Activated CD4-positive, alpha-beta memory T cell treated with anti-CD3 and anti-CD28 coated beads for 36 hours (primary cell): ENCODE measurements at regions of chr5 and their contacts with region 1.

Region 1: GRCh38 chr5:91266184-91266705 is 116.9 kb downstream of the ARRDC3 start:
- DNase-seq: no peak
- H3K4me3 Mint-ChIP-seq: no peak overlapping the region
- H3K27ac Mint-ChIP-seq: no peak overlapping the region
- H3K4me1 Mint-ChIP-seq: peaks cover 21% of the 10 kb centered on the region
- H3K27me3 Mint-ChIP-seq: no peaks in the 10 kb centered on the region

Region 2: GRCh38 chr5:91095313-91095712 is 170.9 kb before region 1 on chr5:
- CTCF ChIA-PET with region 1: no interaction called
- POLR2A ChIA-PET with region 1: no interaction called
- intact Hi-C with region 1: no loop called
- DNase-seq: no peak
- H3K4me3 Mint-ChIP-seq: no peak overlapping the region
- H3K27ac Mint-ChIP-seq: no peak overlapping the region
- H3K4me1 Mint-ChIP-seq: no peaks in the 10 kb centered on the region
- H3K27me3 Mint-ChIP-seq: peaks cover 2% of the 10 kb centered on the region

Region 3: DNA sequence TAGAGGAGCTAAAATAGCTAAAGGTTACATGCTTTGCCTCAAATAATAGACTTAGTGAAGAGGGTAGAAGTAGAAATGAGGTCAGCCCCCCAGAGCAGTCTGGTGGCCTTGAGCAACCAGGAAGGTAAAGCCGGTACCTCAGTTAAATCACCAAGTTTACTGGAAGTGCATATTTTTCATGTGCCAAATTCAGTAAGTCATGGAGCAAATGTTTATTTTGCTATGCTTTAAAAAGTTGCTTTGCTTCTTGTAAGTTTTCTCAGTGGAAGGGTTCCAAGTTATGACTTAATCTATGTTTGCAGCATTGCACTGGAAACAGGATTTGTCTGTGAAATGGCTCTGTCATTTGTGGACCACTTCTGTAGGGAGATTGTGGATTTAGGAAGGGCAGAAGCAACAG is 139.8 kb before region 1 on chr5:
- CTCF ChIA-PET with region 1: no interaction called
- POLR2A ChIA-PET with region 1: no interaction called
- intact Hi-C with region 1: no loop called
- DNase-seq: no peak
- H3K4me3 Mint-ChIP-seq: no peak overlapping the region
- H3K27ac Mint-ChIP-seq: no peak overlapping the region
- H3K4me1 Mint-ChIP-seq: no peaks in the 10 kb centered on the region
- H3K27me3 Mint-ChIP-seq: no peaks in the 10 kb centered on the region

Region 4: GRCh38 chr5:91225848-91226686 is 40.2 kb before region 1 on chr5:
- CTCF ChIA-PET with region 1: interaction called, 3 read pairs
- POLR2A ChIA-PET with region 1: no interaction called
- intact Hi-C with region 1: loop called (anchors 5 kb)
- DNase-seq: peak; percentile 73
- H3K4me3 Mint-ChIP-seq: no peak overlapping the region
- H3K27ac Mint-ChIP-seq: peak overlapping the region; percentile 13
- H3K4me1 Mint-ChIP-seq: peaks cover 4% of the 10 kb centered on the region
- H3K27me3 Mint-ChIP-seq: peaks cover 7% of the 10 kb centered on the region